ENCODE measurements at regions of chr7 and their contacts with region 1.

Region 1: GRCh38 chr7:150778738-150779301 is 21.3 kb downstream of the TMEM176B start:
- DNase-seq: peak; percentile 91
- ATAC-seq: peak; percentile 93

Region 2: DNA sequence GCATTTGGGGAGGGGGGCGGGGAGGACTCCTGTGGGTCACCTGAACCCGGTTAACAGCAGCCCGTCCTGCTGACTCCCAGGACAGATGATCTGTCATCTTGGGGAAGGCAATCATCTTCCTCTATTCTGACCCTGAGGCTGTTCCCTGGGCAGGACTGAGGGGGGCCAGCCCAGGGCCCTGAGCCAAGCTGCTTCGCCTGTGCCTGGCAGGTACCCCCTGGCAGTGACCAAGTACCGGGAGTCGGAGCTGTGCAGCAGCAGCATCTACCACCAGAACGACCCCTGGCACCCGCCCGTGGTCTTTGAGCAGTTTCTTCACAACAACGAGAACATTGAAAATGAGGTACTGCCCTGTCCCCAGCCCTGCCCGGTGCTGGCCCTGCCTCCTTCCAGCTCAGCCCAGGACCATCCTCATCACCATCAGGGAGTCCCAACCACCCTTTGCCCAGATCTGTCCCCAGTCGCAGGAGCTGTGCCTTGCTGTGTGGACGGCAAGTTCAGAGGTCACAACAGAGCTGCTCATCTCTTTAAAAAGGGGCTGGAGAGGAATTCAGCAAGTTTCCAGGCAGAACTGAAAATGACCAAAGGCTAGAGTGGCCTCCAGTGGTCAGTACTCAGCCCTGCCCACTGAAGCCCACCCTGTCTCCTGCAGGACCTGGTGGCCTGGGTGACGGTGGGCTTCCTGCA is 81.6 kb after region 1 on chr7:
- intact Hi-C with region 1: loop called (anchors 5 kb)
- DNase-seq: no peak
- ATAC-seq: no peak

Region 3: DNA sequence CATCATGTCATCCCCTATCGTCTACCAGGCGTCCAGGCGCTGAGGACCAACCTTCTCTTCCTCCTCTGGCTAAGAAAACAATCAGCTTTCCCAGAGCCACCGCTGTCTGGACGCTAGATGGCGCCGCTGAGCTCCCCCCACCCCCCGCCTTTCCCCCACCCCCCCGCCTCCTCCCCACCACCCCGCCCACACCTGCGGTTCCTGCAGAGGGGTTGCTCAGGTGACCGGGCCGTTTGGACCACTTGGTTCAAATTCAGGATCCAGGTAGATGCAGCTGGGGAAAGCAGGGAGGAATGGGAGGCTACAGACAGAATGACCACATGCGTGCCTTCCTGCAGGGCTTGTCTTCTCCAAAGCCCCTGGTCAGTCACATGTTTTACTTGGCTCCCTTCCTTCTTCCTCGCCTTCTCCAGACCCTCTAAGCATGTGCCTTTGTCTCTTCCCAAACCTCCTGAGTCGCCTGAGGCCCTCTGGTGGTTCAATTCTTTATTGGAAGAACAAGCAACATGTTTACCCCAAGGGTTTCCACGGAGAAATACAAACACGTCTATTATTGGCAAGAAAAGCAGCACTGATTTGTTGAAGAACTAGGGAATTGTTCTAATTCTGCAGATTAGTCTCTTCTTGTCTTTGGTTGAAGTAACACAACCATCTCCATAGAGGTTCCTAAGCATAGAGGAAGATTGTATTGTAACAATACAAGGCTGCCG is 98.2 kb after region 1 on chr7:
- intact Hi-C with region 1: loop called (anchors 5 kb)
- DNase-seq: peak; percentile 58
- ATAC-seq: peak; percentile 93

Region 4: DNA sequence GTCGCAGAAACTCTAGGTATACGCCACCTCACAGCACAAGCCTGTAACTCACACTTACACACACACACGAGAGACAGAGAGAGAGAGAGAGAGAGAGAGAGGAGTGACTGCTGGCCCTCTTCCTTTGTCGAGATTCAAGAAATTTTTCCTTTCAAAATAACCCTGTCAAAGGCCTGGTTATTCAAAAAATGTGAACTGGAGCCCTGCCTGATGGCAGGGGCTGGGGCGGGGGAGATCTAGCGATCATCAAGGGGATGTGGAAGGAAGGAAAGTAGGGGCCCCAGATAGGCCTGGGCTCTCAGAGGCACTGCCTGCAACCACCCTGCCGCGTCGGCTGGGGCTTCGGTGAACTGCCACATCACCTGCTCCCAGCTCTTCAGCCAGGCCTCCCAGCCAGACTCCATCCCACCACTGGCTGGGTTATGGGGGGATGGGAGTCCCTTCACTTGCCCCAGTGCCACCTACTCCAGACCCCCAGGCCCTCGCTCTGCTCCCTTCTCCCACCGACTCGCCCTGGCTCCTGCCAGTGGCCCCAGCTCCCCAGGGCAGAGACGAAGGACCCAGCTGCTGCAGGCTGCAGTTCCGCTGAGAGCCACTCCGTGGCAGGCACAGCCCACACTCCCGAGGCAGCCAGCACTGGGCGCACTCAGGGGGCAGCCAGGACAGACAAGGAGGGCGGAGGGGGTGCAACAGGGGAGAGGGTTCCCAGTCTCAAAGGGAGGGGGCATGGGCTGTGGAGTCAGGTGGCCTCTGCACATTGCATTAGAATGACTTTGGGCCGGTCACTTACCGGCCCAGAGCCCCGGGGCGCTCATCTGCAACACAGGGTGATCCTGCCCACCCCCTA is 184.0 kb after region 1 on chr7:
- intact Hi-C with region 1: no loop called
- DNase-seq: peak; percentile 77
- ATAC-seq: peak; percentile 47

Region 5: GRCh38 chr7:150988230-150989226 is 209.7 kb after region 1 on chr7:
- intact Hi-C with region 1: loop called (anchors 5 kb)
- DNase-seq: peak; percentile 78
- ATAC-seq: peak; percentile 59